ENCODE measurements at regions of chr13 and their contacts with region 1.

Region 1: GRCh38 chr13:97026531-97027161 is 32.4 kb upstream of the OXGR1 start:
- DNase-seq: no peak
- H3K4me3 ChIP-seq: no peak overlapping the region
- H3K27ac ChIP-seq: peak overlapping the region in 1 of 4 donors; percentile 27
- H3K4me1 ChIP-seq: peaks cover 0 to 6% (median 0%) of the 10 kb centered on the region in 4 donors
- H3K27me3 ChIP-seq: peaks cover 0 to 3% (median 0%) of the 10 kb centered on the region in 4 donors
- CTCF ChIP-seq: no peak
- EP300 ChIP-seq: no peak
- POLR2A ChIP-seq: no peak

Region 2: GRCh38 chr13:97212601-97213040 is 186.0 kb after region 1 on chr13:
- intact Hi-C with region 1: loop called (anchors 10 kb)
- DNase-seq: no peak
- H3K4me3 ChIP-seq: no peak overlapping the region
- H3K27ac ChIP-seq: peak overlapping the region; percentile 4 to 30 (median 12)
- H3K4me1 ChIP-seq: peaks cover 0 to 18% (median 12%) of the 10 kb centered on the region in 4 donors
- H3K27me3 ChIP-seq: no peaks in the 10 kb centered on the region
- CTCF ChIP-seq: peak; percentile 45 to 60 (median 56)
- EP300 ChIP-seq: no peak
- POLR2A ChIP-seq: no peak

Region 3: GRCh38 chr13:97319113-97319720 is 292.6 kb after region 1 on chr13:
- intact Hi-C with region 1: no loop called
- DNase-seq: no peak
- H3K4me3 ChIP-seq: no peak overlapping the region
- H3K27ac ChIP-seq: peak overlapping the region; percentile 55 to 74 (median 74)
- H3K4me1 ChIP-seq: peaks cover 70 to 99% (median 95%) of the 10 kb centered on the region in 4 donors
- H3K27me3 ChIP-seq: no peaks in the 10 kb centered on the region
- CTCF ChIP-seq: no peak
- EP300 ChIP-seq: no peak
- POLR2A ChIP-seq: no peak

Region 4: GRCh38 chr13:98327371-98328270 is 1301.0 kb after region 1 on chr13:
- intact Hi-C with region 1: no loop called
- DNase-seq: no peak
- H3K4me3 ChIP-seq: no peak overlapping the region
- H3K27ac ChIP-seq: no peak overlapping the region
- H3K4me1 ChIP-seq: peaks cover 0 to 11% (median 5%) of the 10 kb centered on the region in 4 donors
- H3K27me3 ChIP-seq: no peaks in the 10 kb centered on the region
- CTCF ChIP-seq: no peak
- EP300 ChIP-seq: no peak
- POLR2A ChIP-seq: no peak